ENCODE measurements at regions of chr17 and their contacts with region 1.

Region 1: DNA sequence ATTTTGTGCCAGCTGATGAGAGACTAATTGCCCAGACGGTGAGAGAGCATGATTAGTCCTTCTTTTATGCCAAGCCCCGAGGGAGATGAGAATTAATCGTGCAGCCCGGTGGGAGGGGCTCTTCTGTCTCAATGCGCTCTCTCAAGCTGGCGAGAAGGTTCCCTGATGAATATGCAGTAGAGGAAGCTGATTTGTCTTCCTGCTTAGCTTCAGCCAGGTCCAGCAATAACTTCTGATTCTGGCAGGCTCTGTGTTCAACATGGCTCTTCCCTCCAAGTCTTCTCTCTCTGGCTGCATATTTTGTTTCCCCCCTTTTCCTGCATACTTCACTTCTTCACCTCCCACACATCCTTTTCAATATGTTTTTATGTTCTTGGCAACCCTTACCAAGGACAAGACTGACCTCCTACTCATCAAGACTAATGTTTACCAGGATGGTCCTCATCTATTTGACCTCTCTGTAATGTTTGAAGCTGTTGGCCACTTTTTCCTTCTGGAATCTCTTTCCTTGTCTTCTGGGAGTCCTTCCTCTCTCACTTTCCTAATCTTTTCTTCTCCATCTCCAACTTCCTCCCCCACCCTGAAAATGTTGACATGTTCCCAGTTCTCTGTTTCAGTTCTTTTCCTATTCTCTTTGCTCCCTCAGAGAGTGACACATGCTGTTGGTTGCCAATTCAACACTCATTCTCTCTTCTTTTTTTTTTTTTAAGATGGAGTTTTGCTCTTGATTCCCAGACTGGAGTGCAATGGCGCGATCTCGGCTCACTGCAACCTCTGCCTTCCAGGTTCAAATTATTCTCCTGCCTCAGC is 33.1 kb downstream of the ARL4D start:
- DNase-seq: no peak
- ATAC-seq: no peak
- H3K4me3 ChIP-seq: no peak overlapping the region
- H3K27ac ChIP-seq: no peak overlapping the region; the same call in 1 of the 2 replicates
- H3K4me1 ChIP-seq: peaks cover 2% of the 10 kb centered on the region
- H3K27me3 ChIP-seq: no peaks in the 10 kb centered on the region
- CTCF ChIP-seq: no peak

Region 2: DNA sequence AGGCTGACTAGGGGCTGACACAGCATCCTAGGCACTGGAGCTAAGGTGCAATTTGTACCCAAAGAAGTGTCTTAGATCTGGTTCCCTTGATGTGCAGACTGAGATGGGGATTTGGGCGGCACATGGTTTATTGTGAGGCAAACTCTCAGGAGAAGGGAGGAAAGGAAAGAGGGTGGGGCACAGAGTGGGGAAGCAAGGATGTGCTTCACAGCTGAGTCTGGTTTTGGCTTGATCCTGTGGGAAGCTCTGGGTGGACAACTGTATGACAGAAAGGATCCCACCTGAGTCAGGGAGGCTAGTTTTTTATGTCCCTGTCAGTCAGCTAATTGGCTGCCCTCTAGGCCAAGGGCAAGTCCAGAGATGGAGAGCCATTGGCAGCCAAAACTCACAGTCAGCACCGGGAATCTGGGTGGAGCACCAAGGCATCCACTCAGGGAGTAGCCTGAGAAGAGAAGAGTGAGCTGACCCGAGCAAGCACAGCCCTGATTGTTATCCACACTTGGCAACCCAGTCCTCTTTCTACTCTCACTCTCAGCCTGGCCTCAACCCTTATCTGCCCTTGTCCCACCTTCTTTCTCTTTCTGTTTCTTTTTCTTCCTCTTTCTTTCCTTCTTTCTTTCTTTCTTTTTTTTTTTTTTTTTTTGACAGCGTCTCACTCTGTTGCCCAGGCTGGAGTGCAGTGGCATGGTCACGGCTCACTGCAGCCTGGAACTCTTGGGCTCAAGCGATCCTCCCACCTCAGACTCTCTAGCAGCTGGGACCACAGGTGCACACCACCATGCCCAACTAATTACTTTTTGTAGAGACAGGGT is 21.2 kb before region 1 on chr17:
- CTCF ChIA-PET with region 1: interaction called, 6 read pairs
- POLR2A ChIA-PET with region 1: interaction called, 10 read pairs
- in situ Hi-C with region 1: no loop called
- intact Hi-C with region 1: no loop called
- DNase-seq: no peak
- ATAC-seq: no peak
- H3K4me3 ChIP-seq: no peak overlapping the region
- H3K27ac ChIP-seq: no peak overlapping the region
- H3K4me1 ChIP-seq: no peaks in the 10 kb centered on the region
- H3K27me3 ChIP-seq: no peaks in the 10 kb centered on the region
- CTCF ChIP-seq: no peak